Activated CD8-positive, alpha-beta T cell treated with anti-CD3 and anti-CD28 coated beads, Interleukin-2, amount 10 ng/mL, durations not matched to agents 7 days and 5 days (primary cell): ENCODE measurements at regions of chr6 and their contacts with region 1.

Region 1: DNA sequence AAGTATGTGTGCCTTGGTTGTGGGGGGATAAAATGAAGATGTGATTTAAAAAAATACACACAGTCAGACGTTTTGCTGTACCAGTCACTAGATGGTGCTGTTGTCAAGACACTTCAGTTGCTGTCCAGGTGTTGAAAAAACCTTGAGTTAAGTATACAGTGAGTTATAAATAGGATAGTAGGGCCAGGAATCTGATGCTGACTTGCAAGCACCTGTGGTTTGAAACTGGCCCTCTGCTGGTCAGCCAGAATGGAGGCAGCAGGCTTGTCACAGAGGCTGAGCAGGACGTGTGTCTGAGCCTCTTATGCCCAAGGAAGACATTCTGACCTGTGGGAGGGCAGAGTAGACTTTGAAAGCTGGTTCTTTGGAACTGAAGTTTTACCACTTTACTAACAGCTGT is 27.8 kb downstream of the RNF8 start:
- DNase-seq: peak; percentile 53
- ATAC-seq: peak; percentile 76
- H3K4me3 Mint-ChIP-seq: no peak overlapping the region
- H3K27ac Mint-ChIP-seq: no peak overlapping the region
- H3K4me1 Mint-ChIP-seq: no peaks in the 10 kb centered on the region
- H3K27me3 Mint-ChIP-seq: no peaks in the 10 kb centered on the region

Region 2: GRCh38 chr6:37691904-37692806 is 310.6 kb after region 1 on chr6:
- CTCF ChIA-PET with region 1: interaction called, 19 read pairs
- POLR2A ChIA-PET with region 1: no interaction called
- DNase-seq: peak; percentile 82
- ATAC-seq: peak; percentile 65
- H3K4me3 Mint-ChIP-seq: no peak overlapping the region
- H3K27ac Mint-ChIP-seq: no peak overlapping the region
- H3K4me1 Mint-ChIP-seq: peaks cover 15% of the 10 kb centered on the region
- H3K27me3 Mint-ChIP-seq: peaks cover 33% of the 10 kb centered on the region